ENCODE measurements at regions of chrX and their contacts with region 1.

Region 1: GRCh38 chrX:45758319-45758718 is 557.6 kb upstream of the DIPK2B start:
- DNase-seq: peak; percentile 46
- H3K4me3 Mint-ChIP-seq: peak overlapping the region; percentile 77
- H3K27ac Mint-ChIP-seq: peak overlapping the region; percentile 96
- H3K4me1 Mint-ChIP-seq: peaks cover 72% of the 10 kb centered on the region
- H3K27me3 Mint-ChIP-seq: no peaks in the 10 kb centered on the region

Region 2: GRCh38 chrX:45322382-45322781 is 435.9 kb before region 1 on chrX:
- intact Hi-C with region 1: loop called (anchors 5 kb)
- DNase-seq: no peak
- H3K4me3 Mint-ChIP-seq: no peak overlapping the region
- H3K27ac Mint-ChIP-seq: no peak overlapping the region
- H3K4me1 Mint-ChIP-seq: no peaks in the 10 kb centered on the region
- H3K27me3 Mint-ChIP-seq: peaks cover under 1% of the 10 kb centered on the region

Region 3: DNA sequence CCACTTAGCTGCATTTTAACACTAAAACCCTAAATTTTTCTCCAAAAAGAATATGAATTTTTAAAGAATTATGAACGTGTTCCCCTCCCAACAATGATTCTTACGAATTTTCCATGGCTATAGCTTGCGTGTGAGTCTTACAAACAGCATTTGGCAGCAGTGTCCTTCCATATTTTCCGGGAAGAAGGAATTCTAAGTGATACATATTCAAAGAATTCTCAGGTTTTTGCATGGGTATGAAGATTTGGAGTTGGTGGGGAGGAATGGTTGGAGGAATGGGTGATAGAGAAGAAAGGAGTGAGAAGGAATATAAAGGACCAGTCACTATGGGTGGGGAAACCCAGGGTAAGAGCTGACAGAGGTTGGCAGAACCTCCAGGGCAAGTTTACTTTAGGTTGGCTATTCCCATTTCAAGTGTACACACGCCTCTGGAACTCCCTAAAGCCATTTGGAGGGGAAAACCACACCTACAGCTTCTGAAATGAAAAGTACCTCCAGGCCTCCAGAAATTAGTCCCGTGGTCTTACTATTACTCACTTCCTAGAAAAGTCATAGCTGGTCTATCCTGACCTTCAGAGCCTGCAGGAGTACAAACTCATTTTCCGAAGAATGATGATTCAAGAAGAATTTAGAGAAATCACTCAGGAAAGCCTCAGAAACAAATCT is 136.8 kb before region 1 on chrX:
- intact Hi-C with region 1: loop called (anchors 1 kb)
- DNase-seq: no peak
- H3K4me3 Mint-ChIP-seq: no peak overlapping the region
- H3K27ac Mint-ChIP-seq: peak overlapping the region; percentile 91
- H3K4me1 Mint-ChIP-seq: peaks cover 19% of the 10 kb centered on the region
- H3K27me3 Mint-ChIP-seq: no peaks in the 10 kb centered on the region

Region 4: GRCh38 chrX:45719751-45720501 is 38.4 kb before region 1 on chrX:
- intact Hi-C with region 1: loop called (anchors 1 kb)
- DNase-seq: no peak
- H3K4me3 Mint-ChIP-seq: peak overlapping the region; percentile 1
- H3K27ac Mint-ChIP-seq: peak overlapping the region; percentile 67
- H3K4me1 Mint-ChIP-seq: peaks cover 37% of the 10 kb centered on the region
- H3K27me3 Mint-ChIP-seq: peaks cover 2% of the 10 kb centered on the region

Region 5: DNA sequence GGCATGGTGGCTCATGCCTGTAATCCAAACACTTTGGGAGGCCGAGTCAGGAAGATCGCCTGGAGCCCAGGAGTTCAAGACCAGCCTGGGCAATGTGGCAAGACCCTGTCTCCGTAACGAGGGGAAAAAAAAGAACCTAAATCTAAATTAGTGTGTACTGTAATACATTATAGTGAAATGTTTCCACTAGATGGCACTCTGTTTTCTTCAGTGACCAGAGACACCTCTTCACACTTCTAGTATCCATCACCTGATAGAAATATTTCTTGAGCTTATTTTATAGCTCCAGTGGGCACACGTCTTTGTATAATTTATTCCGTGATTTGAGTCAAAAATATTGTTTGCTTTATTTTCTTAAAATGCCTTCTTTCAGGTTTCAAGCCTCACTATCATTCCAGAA is 43.2 kb after region 1 on chrX:
- intact Hi-C with region 1: loop called (anchors 1 kb)
- DNase-seq: no peak
- H3K4me3 Mint-ChIP-seq: peak overlapping the region; percentile 26
- H3K27ac Mint-ChIP-seq: peak overlapping the region; percentile 11
- H3K4me1 Mint-ChIP-seq: peaks cover 70% of the 10 kb centered on the region
- H3K27me3 Mint-ChIP-seq: peaks cover 3% of the 10 kb centered on the region

Region 6: GRCh38 chrX:45824471-45824870 is 66.2 kb after region 1 on chrX:
- intact Hi-C with region 1: no loop called
- DNase-seq: no peak
- H3K4me3 Mint-ChIP-seq: peak overlapping the region; percentile 9
- H3K27ac Mint-ChIP-seq: peak overlapping the region; percentile 80
- H3K4me1 Mint-ChIP-seq: peaks cover 25% of the 10 kb centered on the region
- H3K27me3 Mint-ChIP-seq: no peaks in the 10 kb centered on the region

Region 7: GRCh38 chrX:45849253-45849862 is 91.0 kb after region 1 on chrX:
- intact Hi-C with region 1: loop called (anchors 2 kb)
- DNase-seq: no peak
- H3K4me3 Mint-ChIP-seq: peak overlapping the region; percentile 94
- H3K27ac Mint-ChIP-seq: peak overlapping the region; percentile 94
- H3K4me1 Mint-ChIP-seq: peaks cover 34% of the 10 kb centered on the region
- H3K27me3 Mint-ChIP-seq: no peaks in the 10 kb centered on the region

Region 8: DNA sequence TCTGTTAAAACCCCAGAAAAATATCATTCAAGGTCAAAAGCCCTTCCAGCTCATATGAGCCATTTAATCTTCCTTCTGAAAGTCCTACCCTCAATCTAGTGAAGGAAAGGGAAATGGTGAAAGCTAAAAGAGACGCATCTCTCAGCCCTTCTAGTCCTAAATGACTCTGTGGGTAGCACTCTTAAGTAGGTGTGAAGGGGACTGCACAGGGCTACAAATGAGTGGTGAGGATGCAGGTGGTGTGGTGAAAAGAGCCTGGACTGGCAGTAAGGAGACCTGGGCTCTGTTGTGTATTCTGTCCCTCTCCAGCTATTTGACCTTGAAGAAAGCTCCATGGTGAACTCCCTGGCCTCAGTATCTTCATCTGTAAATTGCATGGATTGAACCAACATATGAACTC is 114.2 kb after region 1 on chrX:
- intact Hi-C with region 1: no loop called
- DNase-seq: no peak
- H3K4me3 Mint-ChIP-seq: no peak overlapping the region
- H3K27ac Mint-ChIP-seq: no peak overlapping the region
- H3K4me1 Mint-ChIP-seq: peaks cover 13% of the 10 kb centered on the region
- H3K27me3 Mint-ChIP-seq: peaks cover 4% of the 10 kb centered on the region

Region 9: DNA sequence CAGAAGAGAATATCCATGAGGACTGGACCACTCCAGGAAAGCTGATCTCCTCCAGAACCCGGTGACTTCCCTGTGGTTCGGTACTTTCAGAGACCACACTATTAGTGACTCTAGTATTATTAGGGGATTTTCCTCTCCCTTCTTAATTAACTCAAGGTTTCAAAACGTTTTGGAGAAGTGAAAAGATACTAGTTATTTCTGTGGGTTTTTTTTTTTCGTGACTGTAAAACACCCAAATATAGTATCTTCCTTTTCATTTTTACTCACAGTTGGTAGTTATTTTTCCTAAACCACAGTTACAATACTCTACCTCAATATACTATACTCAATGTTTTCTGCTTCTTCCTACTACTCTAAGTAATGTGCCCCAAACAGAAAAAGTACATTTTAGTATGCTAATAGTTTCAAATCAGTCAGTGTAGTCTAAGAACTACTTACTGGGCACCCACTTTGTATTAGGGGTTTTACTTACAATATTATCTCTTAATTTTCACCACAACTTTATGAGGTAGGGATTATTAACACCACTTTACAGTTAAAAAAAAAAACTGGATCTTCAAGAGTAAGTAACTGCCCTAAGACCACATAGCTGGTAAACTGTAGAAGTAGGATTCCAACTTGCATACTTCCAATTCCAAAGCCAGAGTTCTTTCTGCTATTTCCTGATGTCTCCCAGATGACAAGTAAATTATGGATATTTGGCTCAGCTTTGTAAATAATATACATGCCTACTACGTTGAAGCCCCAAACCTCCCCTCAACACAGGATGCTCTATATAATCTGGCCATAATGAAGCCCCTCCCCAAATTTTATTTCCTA is 955.6 kb after region 1 on chrX:
- intact Hi-C with region 1: loop called (anchors 5 kb)
- DNase-seq: no peak
- H3K4me3 Mint-ChIP-seq: peak overlapping the region; percentile 39
- H3K27ac Mint-ChIP-seq: peak overlapping the region; percentile 83
- H3K4me1 Mint-ChIP-seq: peaks cover 69% of the 10 kb centered on the region
- H3K27me3 Mint-ChIP-seq: no peaks in the 10 kb centered on the region

Measured in activated T-helper 1 cell treated with anti-CD3 and anti-CD28 coated beads, Interleukin-12 subunit alpha, Interleukin-12 subunit beta, Interleukin-2, Interleukin-4 antibody, amounts not matched to agents 30 ng/mL and 10 ng/mL and 1 ng/mL, durations not matched to agents 14 hours and 24 hours and 36 hours (primary cell).